GM12878 (cell line): ENCODE measurements at regions of chr22 and their contacts with region 1.

Region 1: GRCh38 chr22:49052023-49052538 is 775.6 kb downstream of the BRD1 start:
- DNase-seq: no peak
- ATAC-seq: no peak
- H3K4me3 ChIP-seq: peak overlapping the region; percentile 41
- H3K27ac ChIP-seq: no peak overlapping the region
- H3K4me1 ChIP-seq: no peaks in the 10 kb centered on the region
- H3K27me3 ChIP-seq: no peaks in the 10 kb centered on the region
- CTCF ChIP-seq: no peak
- EP300 ChIP-seq: no peak
- POLR2A ChIP-seq: no peak
- RAD21 ChIP-seq: no peak

Region 2: GRCh38 chr22:49004521-49005399 is 47.3 kb before region 1 on chr22:
- CTCF ChIA-PET with region 1: no interaction called
- POLR2A ChIA-PET with region 1: no interaction called
- RAD21 ChIA-PET with region 1: no interaction called
- SMC1A ChIA-PET with region 1: no interaction called
- in situ Hi-C with region 1: no loop called
- intact Hi-C with region 1: no loop called
- DNase-seq: no peak
- ATAC-seq: no peak
- H3K4me3 ChIP-seq: no peak overlapping the region
- H3K27ac ChIP-seq: no peak overlapping the region
- H3K4me1 ChIP-seq: no peaks in the 10 kb centered on the region
- H3K27me3 ChIP-seq: no peaks in the 10 kb centered on the region
- CTCF ChIP-seq: no peak
- EP300 ChIP-seq: no peak
- POLR2A ChIP-seq: no peak
- RAD21 ChIP-seq: no peak

Region 3: GRCh38 chr22:49156660-49157285 is 104.7 kb after region 1 on chr22:
- CTCF ChIA-PET with region 1: no interaction called
- POLR2A ChIA-PET with region 1: no interaction called
- RAD21 ChIA-PET with region 1: no interaction called
- SMC1A ChIA-PET with region 1: no interaction called
- in situ Hi-C with region 1: loop called (anchors 25 kb)
- intact Hi-C with region 1: no loop called
- DNase-seq: no peak
- ATAC-seq: no peak
- H3K4me3 ChIP-seq: no peak overlapping the region
- H3K27ac ChIP-seq: no peak overlapping the region
- H3K4me1 ChIP-seq: no peaks in the 10 kb centered on the region
- H3K27me3 ChIP-seq: no peaks in the 10 kb centered on the region
- CTCF ChIP-seq: no peak
- EP300 ChIP-seq: no peak
- POLR2A ChIP-seq: no peak
- RAD21 ChIP-seq: no peak